ENCODE measurements at regions of chr14 and their contacts with region 1.

Region 1: GRCh38 chr14:30656190-30656632 is 34.1 kb downstream of the SCFD1 start:
- DNase-seq: no peak
- H3K4me3 ChIP-seq: no peak overlapping the region
- H3K27ac ChIP-seq: no peak overlapping the region
- H3K4me1 ChIP-seq: no peaks in the 10 kb centered on the region
- H3K27me3 ChIP-seq: no peaks in the 10 kb centered on the region
- CTCF ChIP-seq: peak; percentile 48 to 75 (median 48)
- EP300 ChIP-seq: no peak
- POLR2A ChIP-seq: no peak

Region 2: GRCh38 chr14:30471980-30472379 is 184.2 kb before region 1 on chr14:
- intact Hi-C with region 1: no loop called
- DNase-seq: no peak
- H3K4me3 ChIP-seq: no peak overlapping the region
- H3K27ac ChIP-seq: no peak overlapping the region
- H3K4me1 ChIP-seq: no peaks in the 10 kb centered on the region
- H3K27me3 ChIP-seq: no peaks in the 10 kb centered on the region
- CTCF ChIP-seq: no peak
- EP300 ChIP-seq: no peak
- POLR2A ChIP-seq: no peak

Region 3: GRCh38 chr14:30691751-30692398 is 35.7 kb after region 1 on chr14:
- intact Hi-C with region 1: loop called (anchors 5 kb)
- DNase-seq: no peak
- H3K4me3 ChIP-seq: no peak overlapping the region
- H3K27ac ChIP-seq: no peak overlapping the region
- H3K4me1 ChIP-seq: peaks cover 0 to 8% (median 2%) of the 10 kb centered on the region in 4 donors
- H3K27me3 ChIP-seq: no peaks in the 10 kb centered on the region
- CTCF ChIP-seq: no peak
- EP300 ChIP-seq: no peak
- POLR2A ChIP-seq: no peak